Adrenal gland (tissue), 19 donors: ENCODE measurements at regions of chr11 and their contacts with region 1.

Region 1: DNA sequence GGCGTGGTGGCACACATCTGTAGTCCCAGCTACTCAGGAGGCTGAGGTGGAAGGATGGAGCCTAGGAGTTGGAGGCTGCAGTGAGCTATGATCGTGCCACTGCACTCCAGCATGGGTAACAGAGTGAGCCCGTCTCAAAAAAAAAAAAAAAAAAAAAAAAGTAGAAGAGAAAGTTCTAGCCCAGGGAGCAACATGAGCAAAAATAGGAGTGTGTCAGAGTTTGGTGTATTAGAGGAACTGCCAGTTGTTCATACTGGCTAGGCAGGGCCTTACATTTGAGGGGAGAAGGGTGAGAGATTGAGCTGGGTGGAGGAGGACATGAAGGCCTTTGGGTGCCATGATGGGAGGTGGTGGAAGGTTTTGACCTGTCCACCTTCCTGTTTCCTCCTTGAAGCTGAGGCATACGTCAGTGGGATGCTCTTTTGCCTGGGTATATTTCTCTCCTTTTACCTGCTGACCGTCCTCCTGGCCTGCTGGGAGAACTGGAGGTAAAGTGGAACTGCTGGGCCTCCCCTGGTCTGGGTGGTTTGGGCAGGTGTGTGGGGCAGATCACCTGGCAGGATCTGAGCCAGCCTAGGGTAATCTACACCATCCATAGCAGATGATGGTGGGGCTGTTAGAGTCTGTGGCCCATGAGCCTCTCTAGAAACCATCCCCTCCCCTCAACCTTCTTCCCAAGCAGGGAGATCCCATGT is 7.3 kb downstream of the SIDT2 start:
- DNase-seq: no peak
- H3K4me3 ChIP-seq: no peak overlapping the region
- H3K27ac ChIP-seq: peak overlapping the region in 2 of 5 donors; percentile 16 to 45
- H3K4me1 ChIP-seq: peaks cover 3 to 7% of the 10 kb centered on the region in 2 donors
- H3K27me3 ChIP-seq: no peaks in the 10 kb centered on the region
- CTCF ChIP-seq: no peak
- POLR2A ChIP-seq: no peak

Region 2: DNA sequence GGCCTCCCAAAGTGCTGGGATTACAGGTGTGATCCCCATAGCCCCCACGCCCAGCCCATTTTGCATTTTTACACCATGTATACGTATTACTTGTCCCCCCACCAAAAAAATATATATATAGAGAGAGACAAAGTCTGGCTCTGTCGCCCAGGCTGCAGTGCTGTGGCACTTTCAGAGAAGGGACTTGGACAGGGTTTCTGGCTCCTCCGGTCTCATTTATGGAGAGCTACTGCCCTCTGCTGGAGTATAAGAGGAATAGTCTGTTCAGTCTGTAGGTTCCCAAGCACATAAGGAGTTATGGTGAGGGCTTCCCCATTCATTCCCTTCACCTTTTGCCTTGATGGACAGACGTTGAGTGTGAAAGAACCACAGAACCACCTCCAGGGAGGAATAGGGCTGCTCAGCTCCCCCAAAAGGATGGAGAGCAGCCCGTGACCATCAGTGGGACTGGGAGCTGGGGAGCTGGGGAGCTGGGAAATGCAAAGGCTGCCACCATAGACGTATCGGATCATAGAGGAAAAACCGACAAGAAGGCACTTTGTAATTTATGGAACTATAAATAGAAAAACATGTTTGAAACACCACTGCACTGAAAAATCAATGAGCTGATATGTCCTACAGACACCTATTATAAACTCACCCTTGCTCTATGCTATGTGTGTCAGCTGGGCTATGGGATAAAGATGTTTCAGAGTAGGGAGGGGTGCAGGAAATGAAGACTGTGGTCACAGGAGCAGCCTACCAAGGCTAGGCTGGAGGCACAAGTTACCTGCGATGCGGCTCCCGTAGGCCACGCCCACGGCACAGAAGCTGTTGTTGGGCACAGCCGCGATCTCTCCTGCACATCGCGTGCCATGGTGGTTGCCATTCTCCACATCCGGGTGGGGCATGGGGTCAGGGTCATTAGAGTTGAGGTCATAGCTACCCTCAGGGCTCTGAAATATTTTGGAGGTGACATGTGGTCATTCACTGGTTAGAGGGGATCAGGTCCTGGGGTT is 40.8 kb after region 1 on chr11:
- intact Hi-C with region 1: loop called (anchors 2 kb)
- DNase-seq: peak; percentile 55 to 79 (median 66)
- H3K4me3 ChIP-seq: no peak overlapping the region
- H3K27ac ChIP-seq: no peak overlapping the region
- H3K4me1 ChIP-seq: peaks cover 11 to 22% of the 10 kb centered on the region in 2 donors
- H3K27me3 ChIP-seq: no peaks in the 10 kb centered on the region
- CTCF ChIP-seq: peak; percentile 61 to 91 (median 84)
- POLR2A ChIP-seq: no peak